Tibial artery (tissue), 4 donors: ENCODE measurements at regions of chr20 and their contacts with region 1.

Region 1: DNA sequence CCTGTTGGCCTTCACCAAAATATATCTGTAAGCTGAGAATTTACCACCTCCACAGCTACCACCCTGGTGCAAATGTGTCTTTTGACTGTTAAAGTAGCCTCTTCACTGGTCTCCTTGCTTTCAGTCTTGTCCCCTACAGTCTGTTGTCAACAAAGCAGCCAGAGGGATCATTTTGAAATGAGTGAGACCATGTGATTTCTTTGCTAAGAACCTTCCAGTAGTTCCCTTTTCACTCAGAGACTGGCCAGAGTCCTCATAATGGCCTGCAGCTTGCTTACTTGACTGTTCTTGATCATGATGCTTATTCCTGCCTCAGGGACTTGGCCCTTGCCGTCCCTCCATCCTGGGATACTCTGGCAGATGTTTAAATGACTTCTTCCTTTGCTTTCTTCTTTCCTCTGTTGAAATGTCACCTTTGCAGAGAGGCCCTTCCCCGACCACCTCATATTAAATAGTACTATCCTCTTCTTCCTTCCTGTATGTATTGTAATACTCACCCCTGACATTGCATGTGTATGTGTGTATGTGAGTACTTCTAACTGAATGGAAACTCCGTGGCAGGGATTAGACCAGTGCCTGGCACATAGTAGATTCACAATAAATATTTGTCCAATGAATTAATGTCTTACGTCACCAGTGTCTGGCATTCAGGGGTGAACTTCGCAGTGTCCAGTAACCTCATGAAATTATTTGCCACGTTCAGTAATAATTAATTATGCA is 5.0 kb downstream of the MANBAL start:
- DNase-seq: no peak
- H3K4me3 ChIP-seq: no peak overlapping the region
- H3K27ac ChIP-seq: peak overlapping the region; percentile 78 to 80
- H3K4me1 ChIP-seq: peaks cover 7 to 70% (median 59%) of the 10 kb centered on the region in 4 donors
- H3K27me3 ChIP-seq: no peaks in the 10 kb centered on the region
- CTCF ChIP-seq: no peak

Region 2: DNA sequence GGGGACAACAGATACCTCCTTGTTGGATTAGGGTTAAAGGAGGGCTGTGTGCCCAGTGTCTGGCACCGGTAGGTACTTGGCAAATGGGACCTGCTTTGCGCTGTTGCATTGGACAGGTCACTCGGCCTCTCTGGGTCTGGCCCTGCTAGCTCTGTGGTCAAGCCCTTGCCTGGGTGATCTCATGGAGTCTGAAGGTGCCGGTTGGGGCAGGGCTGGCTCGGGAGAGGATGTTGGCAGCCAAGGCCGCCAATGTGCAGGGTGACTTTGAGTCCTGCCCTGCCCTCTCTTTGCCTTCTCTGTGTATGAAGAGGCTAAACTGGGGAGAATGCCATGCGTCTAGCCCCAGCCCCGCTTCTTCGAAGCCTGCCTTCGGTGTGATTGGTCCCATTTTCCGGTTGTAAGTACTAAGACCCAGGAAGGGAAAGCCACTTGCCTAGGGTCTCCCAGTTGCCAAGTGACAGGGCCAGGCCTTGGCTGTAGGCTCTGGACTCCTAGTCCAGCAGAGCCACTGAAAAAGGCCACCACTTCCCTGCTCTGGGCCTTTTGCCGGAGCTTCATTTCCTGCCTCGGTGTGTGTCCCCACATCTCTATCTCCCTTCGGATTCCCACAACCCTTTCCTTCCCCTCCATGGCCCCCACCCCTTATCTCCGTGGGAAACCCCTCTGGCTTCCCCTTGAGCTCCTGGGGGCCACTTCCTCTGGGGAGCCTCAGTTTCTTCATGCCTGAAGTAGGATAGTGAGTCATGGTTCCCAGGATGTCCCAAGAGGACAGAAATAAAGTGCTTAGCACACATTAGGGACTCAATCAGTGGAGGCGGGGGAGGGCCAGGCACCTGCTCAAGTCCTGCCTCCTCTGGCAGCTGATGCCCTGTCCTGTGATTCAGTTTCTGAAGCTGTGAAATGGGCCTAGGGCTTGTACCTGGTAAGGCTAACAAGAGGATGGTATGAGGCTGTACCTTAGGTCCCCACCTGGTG is 55.4 kb after region 1 on chr20:
- intact Hi-C with region 1: loop called (anchors 5 kb)
- DNase-seq: peak in 1 of 2 donors; percentile 80
- H3K4me3 ChIP-seq: no peak overlapping the region
- H3K27ac ChIP-seq: peak overlapping the region; percentile 97 to 99
- H3K4me1 ChIP-seq: peaks cover 0 to 75% (median 52%) of the 10 kb centered on the region in 4 donors
- H3K27me3 ChIP-seq: no peaks in the 10 kb centered on the region
- CTCF ChIP-seq: no peak